H1 (cell line): ENCODE measurements at regions of chr15 and their contacts with region 1.

Region 1: GRCh38 chr15:44728576-44729407 is 7.5 kb upstream of the TRIM69 start:
- DNase-seq: peak; percentile 84 to 89
- H3K4me3 ChIP-seq: peak overlapping the region; percentile 80 to 90 (median 90)
- H3K27ac ChIP-seq: peak overlapping the region; percentile 51; the same call in 1 of the 2 replicates
- H3K4me1 ChIP-seq: peaks cover 0 to 7% (median 4%) of the 10 kb centered on the region in 4 experiments; a peak in 4 of 7 replicates
- H3K27me3 ChIP-seq: no peaks in the 10 kb centered on the region
- CTCF ChIP-seq: no peak
- EP300 ChIP-seq: no peak
- POLR2A ChIP-seq: peak in 1 of 2 experiments; percentile 67; a peak in 2 of 3 replicates
- RAD21 ChIP-seq: no peak

Region 2: GRCh38 chr15:44711356-44712107 is 17.3 kb before region 1 on chr15 and contains the start of gene B2M:
- CTCF ChIA-PET with region 1: interaction called, 17 read pairs
- POLR2A ChIA-PET with region 1: interaction called, 64 read pairs
- DNase-seq: peak; percentile 83 to 96
- H3K4me3 ChIP-seq: peak within 1 kb of the TSS; percentile 79 to 95 (median 88)
- H3K27ac ChIP-seq: peak within 1 kb of the TSS; percentile 60; the same call in 1 of the 2 replicates
- H3K4me1 ChIP-seq: 0 out of 7 replicates have a peak, but pooled peaks cover 0 to 3% (median 0%) of the 10 kb centered on the region in 4 experiments
- H3K27me3 ChIP-seq: peaks cover 0 to 10% (median 8%) of the 10 kb centered on the region in 4 experiments; a peak in 5 of 7 replicates
- CTCF ChIP-seq: no peak
- EP300 ChIP-seq: no peak
- POLR2A ChIP-seq: peak; percentile 93 to 97
- RAD21 ChIP-seq: no peak
- total RNA-seq, gene B2M: 71.2 and 78.9 TPM in 2 replicates